ENCODE measurements at regions of chr9 and their contacts with region 1.

Region 1: GRCh38 chr9:20043035-20043434 is 254.2 kb upstream of the SLC24A2 start:
- DNase-seq: peak; percentile 23
- H3K4me3 Mint-ChIP-seq: peak overlapping the region; percentile 53
- H3K27ac Mint-ChIP-seq: peak overlapping the region; percentile 70
- H3K4me1 Mint-ChIP-seq: peaks cover 30% of the 10 kb centered on the region
- H3K27me3 Mint-ChIP-seq: no peaks in the 10 kb centered on the region

Region 2: DNA sequence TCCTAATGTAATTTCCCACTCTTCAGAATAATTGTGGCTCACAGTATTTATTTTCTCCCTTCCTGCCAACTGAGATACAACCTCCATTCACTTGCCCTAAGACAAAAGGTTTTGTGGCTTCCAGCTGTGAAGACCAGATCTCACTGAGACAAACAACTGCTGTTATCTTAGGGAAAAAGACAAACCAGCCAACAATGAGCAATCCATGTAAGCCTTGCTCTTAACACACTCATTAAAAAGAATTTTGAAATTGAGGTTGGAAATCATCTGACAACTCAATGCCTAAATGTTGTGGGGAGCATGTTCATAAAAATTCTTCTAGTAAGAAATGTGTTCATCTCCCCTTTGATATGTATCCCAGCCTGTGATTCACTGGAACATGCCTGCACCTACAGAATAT is 1436.2 kb before region 1 on chr9:
- CTCF ChIA-PET with region 1: no interaction called
- POLR2A ChIA-PET with region 1: no interaction called
- intact Hi-C with region 1: no loop called
- DNase-seq: no peak
- H3K4me3 Mint-ChIP-seq: no peak overlapping the region
- H3K27ac Mint-ChIP-seq: no peak overlapping the region
- H3K4me1 Mint-ChIP-seq: no peaks in the 10 kb centered on the region
- H3K27me3 Mint-ChIP-seq: no peaks in the 10 kb centered on the region

Region 3: DNA sequence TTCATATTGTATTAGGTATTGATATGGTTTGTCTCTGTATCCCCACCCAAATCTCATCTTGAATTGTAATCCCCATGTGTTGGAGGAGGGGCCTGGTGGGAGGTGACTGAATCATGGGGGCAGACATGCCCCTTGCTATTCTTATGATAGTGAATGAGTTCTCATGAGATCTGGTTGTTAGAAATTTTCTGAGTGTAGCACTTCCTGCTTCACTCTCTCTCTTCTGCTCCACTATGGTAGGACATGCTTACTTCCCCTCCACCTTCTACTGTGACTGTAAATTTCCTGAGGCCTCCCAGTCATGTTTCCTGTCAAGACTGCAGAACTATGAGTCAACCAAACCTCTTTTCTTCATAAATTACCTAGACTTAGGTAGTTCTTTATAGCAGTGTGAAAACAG is 66.8 kb before region 1 on chr9:
- CTCF ChIA-PET with region 1: no interaction called
- POLR2A ChIA-PET with region 1: no interaction called
- intact Hi-C with region 1: loop called (anchors 1 kb)
- DNase-seq: peak; percentile 45
- H3K4me3 Mint-ChIP-seq: no peak overlapping the region
- H3K27ac Mint-ChIP-seq: peak overlapping the region; percentile 74
- H3K4me1 Mint-ChIP-seq: peaks cover 23% of the 10 kb centered on the region
- H3K27me3 Mint-ChIP-seq: no peaks in the 10 kb centered on the region

Region 4: DNA sequence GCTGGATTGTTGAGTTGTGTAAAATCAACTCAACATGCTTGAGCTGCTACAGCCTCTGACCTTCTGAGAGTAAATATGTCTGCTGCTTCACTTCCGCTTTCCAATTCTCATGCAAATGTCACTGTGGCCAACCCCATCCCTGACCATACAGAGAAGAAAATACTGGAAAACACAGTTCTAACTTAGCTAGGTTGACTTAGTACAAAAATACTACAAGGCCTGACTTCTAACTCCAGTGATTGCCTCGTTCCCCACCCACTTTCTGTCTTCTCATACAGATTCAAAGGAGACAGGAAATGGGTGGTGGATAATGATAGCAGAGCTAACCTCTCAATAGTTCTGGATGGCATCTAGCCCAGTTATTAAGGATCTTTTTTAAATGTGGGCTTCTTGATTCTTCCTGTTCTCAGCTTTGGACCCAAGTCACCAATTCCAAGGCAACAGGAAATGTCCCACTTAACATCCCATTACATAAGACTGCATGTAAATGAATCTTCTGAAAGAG is 27.6 kb before region 1 on chr9:
- CTCF ChIA-PET with region 1: no interaction called
- POLR2A ChIA-PET with region 1: no interaction called
- intact Hi-C with region 1: loop called (anchors 2 kb)
- DNase-seq: no peak
- H3K4me3 Mint-ChIP-seq: no peak overlapping the region
- H3K27ac Mint-ChIP-seq: no peak overlapping the region
- H3K4me1 Mint-ChIP-seq: peaks cover 26% of the 10 kb centered on the region
- H3K27me3 Mint-ChIP-seq: peaks cover 1% of the 10 kb centered on the region

Region 5: DNA sequence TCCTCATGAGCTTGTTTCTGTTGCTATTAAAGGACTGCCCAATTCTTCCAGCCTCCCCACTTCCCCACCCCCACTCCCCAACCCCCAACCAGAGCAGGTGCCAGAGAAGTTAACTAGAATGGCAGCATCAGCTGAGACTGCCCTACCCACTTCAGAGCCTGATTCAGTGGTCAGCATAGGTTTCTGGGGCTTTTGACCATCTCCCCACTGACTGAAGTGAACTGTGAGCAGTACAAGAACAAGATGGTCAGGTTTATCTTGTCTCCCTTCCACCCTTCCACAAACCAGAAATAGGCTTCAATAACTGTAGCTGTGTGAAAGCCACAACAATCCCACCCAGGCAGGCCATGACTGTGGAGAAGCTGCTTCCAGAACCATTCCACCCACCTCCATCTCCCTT is 35.2 kb after region 1 on chr9:
- CTCF ChIA-PET with region 1: no interaction called
- POLR2A ChIA-PET with region 1: no interaction called
- intact Hi-C with region 1: no loop called
- DNase-seq: no peak
- H3K4me3 Mint-ChIP-seq: no peak overlapping the region
- H3K27ac Mint-ChIP-seq: no peak overlapping the region
- H3K4me1 Mint-ChIP-seq: no peaks in the 10 kb centered on the region
- H3K27me3 Mint-ChIP-seq: no peaks in the 10 kb centered on the region

Region 6: DNA sequence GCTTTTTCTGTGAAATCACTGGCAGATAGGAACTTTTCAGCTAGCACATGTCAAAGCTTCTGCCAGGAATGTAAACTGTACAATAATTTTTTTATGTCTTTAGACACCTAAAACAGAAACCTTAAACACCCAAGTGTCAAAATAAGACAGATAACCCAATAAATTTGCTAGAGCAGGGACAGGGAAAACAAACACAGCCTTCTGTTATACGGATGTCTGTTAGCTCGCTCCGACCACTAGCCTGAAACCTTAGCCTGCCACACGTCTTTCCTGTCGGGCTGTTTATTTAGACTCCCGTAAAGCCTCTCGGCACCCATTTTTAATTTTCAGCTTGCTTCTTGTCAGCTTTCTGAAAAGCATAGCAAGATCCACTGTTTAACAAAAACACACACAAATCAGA is 101.2 kb after region 1 on chr9:
- CTCF ChIA-PET with region 1: no interaction called
- POLR2A ChIA-PET with region 1: no interaction called
- intact Hi-C with region 1: no loop called
- DNase-seq: no peak
- H3K4me3 Mint-ChIP-seq: no peak overlapping the region
- H3K27ac Mint-ChIP-seq: no peak overlapping the region
- H3K4me1 Mint-ChIP-seq: no peaks in the 10 kb centered on the region
- H3K27me3 Mint-ChIP-seq: no peaks in the 10 kb centered on the region